Dendritic cell treated with granulocyte-macrophage colony-stimulating factor and Interleukin-4, amounts not matched to agents 40 ng/mL and 50 ng/mL, for 4 days (primary cell): ENCODE measurements at regions of chr7 and their contacts with region 1.

Region 1: DNA sequence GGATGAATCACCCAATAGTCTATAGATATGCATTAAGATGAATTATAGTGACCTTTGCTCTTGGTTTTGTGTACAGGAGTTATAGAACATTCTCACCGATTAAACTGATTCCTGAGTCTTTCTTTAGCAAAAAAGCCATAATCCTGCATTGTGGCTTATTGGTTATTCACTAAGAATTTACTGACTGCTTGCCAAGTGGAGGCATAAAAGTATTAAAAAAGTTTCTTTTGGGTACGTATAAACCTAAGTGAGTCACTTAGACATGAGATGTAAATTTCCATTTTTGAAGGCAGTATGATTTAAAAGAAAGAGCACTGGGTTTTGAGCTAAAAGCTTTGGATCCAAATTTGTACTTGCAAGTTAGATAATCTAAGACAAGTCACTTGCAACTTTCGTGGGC is 100.7 kb downstream of the CDK6 start:
- H3K4me3 Mint-ChIP-seq: no peak overlapping the region
- H3K27ac Mint-ChIP-seq: no peak overlapping the region
- H3K4me1 Mint-ChIP-seq: peaks cover 31% of the 10 kb centered on the region
- H3K27me3 Mint-ChIP-seq: no peaks in the 10 kb centered on the region

Region 2: DNA sequence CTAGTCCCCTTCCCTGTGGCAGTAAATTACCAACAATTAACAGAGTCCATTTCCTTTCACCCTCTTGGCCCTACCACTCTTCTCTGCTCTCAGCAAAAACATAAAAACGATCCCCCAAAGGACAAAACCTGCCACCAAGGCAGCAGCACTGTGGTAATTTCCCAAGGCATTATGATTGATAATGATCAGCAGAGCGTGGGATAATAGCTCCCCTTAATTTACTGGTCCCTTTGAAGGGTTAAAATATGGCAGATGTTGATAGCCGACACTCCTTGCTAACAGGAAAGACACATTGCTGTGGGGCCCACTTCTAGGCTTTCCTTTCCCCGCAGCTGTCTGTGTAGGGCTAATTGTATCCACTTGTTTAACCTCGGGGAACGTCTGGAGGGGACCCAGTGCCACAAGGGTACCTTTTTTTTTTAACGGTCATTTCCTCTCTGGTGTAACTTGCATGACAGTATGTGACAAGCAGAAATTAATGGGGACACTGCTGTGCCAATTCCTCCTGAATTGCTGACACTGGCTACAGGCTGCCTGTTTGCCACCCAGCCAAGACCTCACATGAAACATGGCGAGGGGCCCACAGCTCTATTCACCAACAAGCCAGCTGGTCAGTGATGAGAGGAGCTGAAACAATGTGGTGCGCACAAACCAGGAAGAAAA is 19.3 kb after region 1 on chr7:
- intact Hi-C with region 1: loop called (anchors 2 kb)
- H3K4me3 Mint-ChIP-seq: no peak overlapping the region
- H3K27ac Mint-ChIP-seq: peak overlapping the region; percentile 70
- H3K4me1 Mint-ChIP-seq: peaks cover 42% of the 10 kb centered on the region
- H3K27me3 Mint-ChIP-seq: no peaks in the 10 kb centered on the region